H1 (cell line): ENCODE measurements at regions of chr6 and their contacts with region 1.

Region 1: DNA sequence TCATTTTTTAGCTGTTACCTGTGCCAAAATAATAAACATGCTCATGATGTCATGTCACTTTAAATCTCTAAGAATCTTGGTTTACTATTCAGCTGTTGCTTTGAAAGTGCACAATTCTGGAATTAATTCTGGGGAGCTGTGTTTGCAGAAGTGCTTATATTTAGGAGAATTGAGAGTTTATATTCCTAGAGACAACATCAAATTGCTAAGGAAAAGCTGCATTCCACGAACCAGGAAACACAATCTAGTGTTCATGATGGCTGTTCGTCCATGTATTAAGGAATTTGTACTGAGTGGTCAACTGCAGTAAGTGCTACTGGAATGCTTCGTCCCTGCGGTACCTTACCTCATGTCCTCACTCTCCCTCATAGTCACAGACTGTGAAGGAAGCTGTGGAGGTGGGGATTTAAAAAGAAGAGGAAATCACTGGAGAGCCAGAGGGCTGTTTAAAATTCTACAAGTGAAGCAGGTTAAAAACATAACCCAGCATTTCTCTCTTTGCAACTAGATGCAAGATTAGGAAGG is 161.0 kb downstream of the TRMT11 start:
- DNase-seq: no peak
- H3K4me3 ChIP-seq: no peak overlapping the region
- H3K27ac ChIP-seq: no peak overlapping the region
- H3K4me1 ChIP-seq: peaks cover 0 to 7% (median 0%) of the 10 kb centered on the region in 4 experiments; a peak in 2 of 7 replicates
- H3K27me3 ChIP-seq: no peaks in the 10 kb centered on the region
- CTCF ChIP-seq: no peak
- EP300 ChIP-seq: no peak
- POLR2A ChIP-seq: no peak
- RAD21 ChIP-seq: no peak

Region 2: GRCh38 chr6:126170978-126171382 is 23.6 kb after region 1 on chr6:
- CTCF ChIA-PET with region 1: interaction called, 14 read pairs
- POLR2A ChIA-PET with region 1: no interaction called
- DNase-seq: no peak
- H3K4me3 ChIP-seq: no peak overlapping the region
- H3K27ac ChIP-seq: no peak overlapping the region
- H3K4me1 ChIP-seq: peaks cover 0 to 3% (median 0%) of the 10 kb centered on the region in 4 experiments; a peak in 1 of 7 replicates
- H3K27me3 ChIP-seq: no peaks in the 10 kb centered on the region
- CTCF ChIP-seq: peak in 2 of 3 experiments; percentile 44 to 54; a peak in 2 of 4 replicates
- EP300 ChIP-seq: no peak
- POLR2A ChIP-seq: no peak
- RAD21 ChIP-seq: peak; percentile 44 to 46

Region 3: GRCh38 chr6:126280287-126280686 is 132.9 kb after region 1 on chr6:
- CTCF ChIA-PET with region 1: no interaction called
- POLR2A ChIA-PET with region 1: no interaction called
- DNase-seq: no peak
- H3K4me3 ChIP-seq: no peak overlapping the region
- H3K27ac ChIP-seq: no peak overlapping the region
- H3K4me1 ChIP-seq: no peaks in the 10 kb centered on the region
- H3K27me3 ChIP-seq: no peaks in the 10 kb centered on the region
- CTCF ChIP-seq: no peak
- EP300 ChIP-seq: no peak
- POLR2A ChIP-seq: no peak
- RAD21 ChIP-seq: no peak